ENCODE measurements at regions of chr1 and their contacts with region 1.

Region 1: DNA sequence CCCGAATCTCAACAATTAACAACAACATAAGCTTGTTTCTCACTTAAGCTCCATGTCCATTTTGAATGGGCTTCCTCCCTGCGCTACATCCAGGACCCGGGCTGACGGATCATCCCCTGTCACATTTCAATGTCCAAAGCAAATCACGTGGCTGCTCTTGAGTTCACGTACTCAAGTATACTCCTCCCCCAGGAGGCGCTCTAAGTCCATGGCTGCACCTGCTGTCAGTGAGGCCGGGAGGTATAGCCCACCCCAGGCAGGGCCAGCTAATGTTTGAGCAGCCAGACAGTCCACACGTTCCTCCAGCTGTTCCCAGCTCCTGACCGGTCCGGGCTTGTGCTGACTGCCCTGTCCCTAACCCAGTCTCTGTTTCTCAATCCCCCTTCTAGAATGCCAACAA is 220.8 kb downstream of the SLC35F3 start:
- DNase-seq: peak; percentile 79
- H3K4me3 Mint-ChIP-seq: no peak overlapping the region
- H3K27ac Mint-ChIP-seq: no peak overlapping the region
- H3K4me1 Mint-ChIP-seq: no peaks in the 10 kb centered on the region
- H3K27me3 Mint-ChIP-seq: no peaks in the 10 kb centered on the region
- CTCF ChIP-seq: peak; percentile 64

Region 2: GRCh38 chr1:234083460-234083859 is 41.8 kb before region 1 on chr1:
- CTCF ChIA-PET with region 1: no interaction called
- POLR2A ChIA-PET with region 1: no interaction called
- intact Hi-C with region 1: no loop called
- DNase-seq: no peak
- H3K4me3 Mint-ChIP-seq: no peak overlapping the region
- H3K27ac Mint-ChIP-seq: no peak overlapping the region
- H3K4me1 Mint-ChIP-seq: no peaks in the 10 kb centered on the region
- H3K27me3 Mint-ChIP-seq: no peaks in the 10 kb centered on the region
- CTCF ChIP-seq: no peak

Region 3: DNA sequence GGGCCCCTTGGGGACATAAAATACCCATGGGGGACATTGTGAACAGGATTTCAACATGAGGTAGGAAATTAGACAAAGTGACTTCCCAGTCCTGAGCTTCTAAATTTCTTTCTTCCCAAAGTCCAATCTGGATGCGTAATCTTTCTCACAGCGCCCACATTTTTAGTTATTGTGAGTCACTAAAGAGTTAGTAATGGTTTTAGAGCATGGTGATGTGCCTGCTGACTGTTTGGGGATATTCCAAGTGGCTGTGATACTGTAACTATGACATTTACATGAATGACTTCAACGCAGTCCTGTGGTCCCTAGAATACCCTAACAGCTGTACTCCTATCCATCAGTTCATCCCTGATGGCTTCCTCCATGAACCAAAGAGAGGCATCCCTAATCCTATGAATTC is 23.9 kb after region 1 on chr1:
- CTCF ChIA-PET with region 1: interaction called, 12 read pairs
- POLR2A ChIA-PET with region 1: no interaction called
- intact Hi-C with region 1: loop called (anchors 2 kb)
- DNase-seq: peak; percentile 53
- H3K4me3 Mint-ChIP-seq: no peak overlapping the region
- H3K27ac Mint-ChIP-seq: no peak overlapping the region
- H3K4me1 Mint-ChIP-seq: peaks cover 17% of the 10 kb centered on the region
- H3K27me3 Mint-ChIP-seq: no peaks in the 10 kb centered on the region
- CTCF ChIP-seq: no peak

Region 4: GRCh38 chr1:234154320-234155251 is 29.3 kb after region 1 on chr1:
- CTCF ChIA-PET with region 1: interaction called, 12 read pairs
- POLR2A ChIA-PET with region 1: no interaction called
- intact Hi-C with region 1: loop called (anchors 2 kb)
- DNase-seq: peak; percentile 94
- H3K4me3 Mint-ChIP-seq: no peak overlapping the region
- H3K27ac Mint-ChIP-seq: peak overlapping the region; percentile 20
- H3K4me1 Mint-ChIP-seq: peaks cover 2% of the 10 kb centered on the region
- H3K27me3 Mint-ChIP-seq: no peaks in the 10 kb centered on the region
- CTCF ChIP-seq: peak; percentile 99

Region 5: GRCh38 chr1:234188454-234188792 is 63.1 kb after region 1 on chr1:
- CTCF ChIA-PET with region 1: no interaction called
- POLR2A ChIA-PET with region 1: no interaction called
- intact Hi-C with region 1: no loop called
- DNase-seq: peak; percentile 59
- H3K4me3 Mint-ChIP-seq: no peak overlapping the region
- H3K27ac Mint-ChIP-seq: no peak overlapping the region
- H3K4me1 Mint-ChIP-seq: peaks cover 22% of the 10 kb centered on the region
- H3K27me3 Mint-ChIP-seq: no peaks in the 10 kb centered on the region
- CTCF ChIP-seq: peak; percentile 33

Measured in MCF 10A (cell line).